ENCODE measurements at regions of chr2 and their contacts with region 1.

Region 1: GRCh38 chr2:9423100-9423921 is at the starts of genes CPSF3 and ITGB1BP1:
- DNase-seq: peak; percentile 98
- H3K4me3 Mint-ChIP-seq: no peak within 1 kb of the TSS
- H3K27ac Mint-ChIP-seq: peak within 1 kb of the TSS; percentile 94
- H3K4me1 Mint-ChIP-seq: peaks cover 20% of the 10 kb centered on the region
- H3K27me3 Mint-ChIP-seq: no peaks in the 10 kb centered on the region
- CTCF ChIP-seq: no peak
- total RNA-seq, gene CPSF3: 51.0 and 51.6 TPM in 2 replicates
- total RNA-seq, gene ITGB1BP1: 124 and 125 TPM in 2 replicates

Region 2: DNA sequence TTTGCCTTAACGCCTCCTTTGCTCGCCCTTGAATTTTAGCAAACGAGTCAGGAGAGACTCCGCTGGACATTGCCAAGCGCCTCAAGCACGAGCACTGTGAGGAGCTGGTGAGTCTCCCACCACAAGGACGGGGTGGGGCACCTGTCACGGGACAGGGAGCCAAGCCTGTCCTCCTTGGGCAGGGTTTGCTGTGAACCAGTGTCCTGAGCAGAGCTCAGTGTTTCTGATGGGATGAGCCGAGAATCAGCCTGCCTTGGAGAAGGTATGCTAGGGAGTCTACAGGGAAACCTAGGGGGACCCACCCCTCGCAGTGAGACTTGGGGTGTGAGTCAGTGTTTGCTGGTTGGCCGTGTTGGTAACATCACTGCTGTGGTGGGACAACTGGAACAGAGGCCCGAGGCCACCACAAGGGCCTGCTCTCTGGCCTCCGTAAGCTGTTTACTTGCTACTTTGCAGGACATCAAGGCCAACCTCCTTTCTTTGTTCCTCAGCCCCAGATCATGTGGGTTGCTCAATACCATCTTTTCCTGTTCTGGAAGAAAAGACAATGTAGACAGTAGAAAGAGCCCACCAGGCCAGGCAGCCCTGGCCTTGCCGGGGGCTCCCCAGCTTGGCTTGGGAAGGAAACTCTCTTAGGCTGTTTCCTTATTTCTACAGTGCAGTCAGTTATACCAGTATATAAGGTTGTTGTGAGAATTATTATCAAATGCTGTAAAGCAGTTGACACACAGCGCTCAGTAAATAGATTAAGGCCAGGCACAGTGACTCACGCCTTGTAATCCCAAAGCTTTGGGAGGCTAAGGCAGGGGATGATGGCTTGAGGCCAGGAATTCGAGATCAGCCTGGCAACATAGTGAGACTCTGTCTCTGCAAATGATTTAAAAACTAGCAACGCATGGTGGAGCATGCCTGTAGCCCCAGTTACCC is 42.3 kb before region 1 on chr2:
- CTCF ChIA-PET with region 1: no interaction called
- POLR2A ChIA-PET with region 1: interaction called, 44 read pairs
- intact Hi-C with region 1: no loop called
- DNase-seq: peak; percentile 94
- H3K4me3 Mint-ChIP-seq: peak overlapping the region; percentile 11
- H3K27ac Mint-ChIP-seq: peak overlapping the region; percentile 84
- H3K4me1 Mint-ChIP-seq: peaks cover 16% of the 10 kb centered on the region
- H3K27me3 Mint-ChIP-seq: no peaks in the 10 kb centered on the region
- CTCF ChIP-seq: no peak

Region 3: DNA sequence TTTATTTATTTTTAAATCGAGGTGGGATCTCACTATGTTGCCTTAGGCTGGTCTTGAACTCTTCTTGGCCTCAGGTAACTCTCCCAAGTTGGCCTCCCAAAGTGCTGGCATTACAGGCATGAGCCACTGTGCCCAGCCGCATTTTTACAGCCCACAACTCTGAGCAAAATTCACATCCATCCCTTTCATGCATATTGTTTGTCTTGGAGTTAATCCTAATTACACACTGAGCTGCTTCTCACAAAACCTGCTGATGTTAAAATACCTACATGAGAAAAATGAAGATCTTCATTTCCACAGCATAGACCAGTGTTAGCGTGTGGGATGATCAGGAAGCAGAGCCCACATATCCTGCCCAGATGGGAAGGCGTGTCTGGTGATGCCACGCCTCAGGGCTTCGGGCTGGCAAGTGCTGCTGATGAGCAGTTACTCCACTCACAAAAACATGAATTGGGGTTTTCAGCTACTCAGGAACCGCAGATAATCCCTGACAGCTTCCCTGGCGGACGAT is 14.6 kb before region 1 on chr2:
- CTCF ChIA-PET with region 1: interaction called, 3 read pairs
- POLR2A ChIA-PET with region 1: interaction called, 17 read pairs
- intact Hi-C with region 1: no loop called
- DNase-seq: peak; percentile 51
- H3K4me3 Mint-ChIP-seq: no peak overlapping the region
- H3K27ac Mint-ChIP-seq: no peak overlapping the region
- H3K4me1 Mint-ChIP-seq: peaks cover 9% of the 10 kb centered on the region
- H3K27me3 Mint-ChIP-seq: no peaks in the 10 kb centered on the region
- CTCF ChIP-seq: no peak

Region 4: GRCh38 chr2:9440058-9440727 is 16.9 kb after region 1 on chr2:
- CTCF ChIA-PET with region 1: no interaction called
- POLR2A ChIA-PET with region 1: no interaction called
- intact Hi-C with region 1: no loop called
- DNase-seq: no peak
- H3K4me3 Mint-ChIP-seq: no peak overlapping the region
- H3K27ac Mint-ChIP-seq: no peak overlapping the region
- H3K4me1 Mint-ChIP-seq: no peaks in the 10 kb centered on the region
- H3K27me3 Mint-ChIP-seq: no peaks in the 10 kb centered on the region
- CTCF ChIP-seq: no peak